Activated naive CD4-positive, alpha-beta T cell treated with anti-CD3 and anti-CD28 coated beads for 36 hours (primary cell): ENCODE measurements at regions of chr10 and their contacts with region 1.

Region 1: DNA sequence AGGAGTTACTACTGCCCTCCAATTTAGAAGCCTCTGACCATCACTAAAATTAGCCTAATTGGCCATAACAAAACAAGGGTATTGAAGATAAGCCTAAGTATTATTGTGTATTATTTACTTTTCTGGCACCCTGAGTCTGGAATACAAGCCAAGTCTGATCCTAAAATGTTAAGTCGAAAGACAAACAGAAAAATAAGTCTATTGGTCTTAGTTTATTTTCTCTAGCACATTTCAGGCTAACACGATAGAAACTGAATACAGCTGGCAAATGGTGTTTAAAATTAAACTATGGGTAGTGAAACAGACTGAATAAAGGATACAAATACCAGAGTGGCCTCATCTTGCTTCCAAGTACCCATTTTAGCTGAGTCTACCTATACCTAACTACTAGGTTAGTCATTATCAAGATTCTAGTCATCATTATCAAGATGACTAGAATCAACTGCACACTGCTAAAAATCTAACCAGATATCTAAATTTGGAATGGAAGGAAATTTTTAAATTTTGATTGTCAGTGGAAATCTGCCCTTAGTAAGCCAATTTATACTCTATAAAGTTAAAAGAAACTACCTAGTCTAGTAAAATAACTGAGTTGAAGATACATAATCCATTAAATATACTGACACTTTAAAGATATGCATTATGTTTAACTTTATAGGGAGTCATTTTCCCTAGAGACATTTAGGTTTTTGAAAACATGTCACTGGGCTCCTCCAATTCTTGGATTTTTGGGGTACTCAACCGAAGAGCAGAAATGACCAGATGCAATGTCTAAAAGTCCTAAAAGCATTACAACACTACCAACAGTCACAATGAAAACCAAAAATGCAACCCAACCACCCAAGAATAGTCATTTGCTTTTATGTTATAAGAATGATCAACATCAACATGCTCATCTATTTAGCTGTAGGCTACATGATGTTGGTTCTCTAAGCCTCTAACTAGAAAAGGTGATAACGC is 80.9 kb downstream of the NT5C2 start:
- DNase-seq: no peak
- H3K4me3 Mint-ChIP-seq: no peak overlapping the region
- H3K27ac Mint-ChIP-seq: peak overlapping the region; percentile 41
- H3K4me1 Mint-ChIP-seq: peaks cover 18% of the 10 kb centered on the region
- H3K27me3 Mint-ChIP-seq: no peaks in the 10 kb centered on the region

Region 2: GRCh38 chr10:103139803-103140202 is 27.6 kb after region 1 on chr10:
- CTCF ChIA-PET with region 1: no interaction called
- intact Hi-C with region 1: loop called (anchors 1 kb)
- DNase-seq: peak; percentile 10
- H3K4me3 Mint-ChIP-seq: no peak overlapping the region
- H3K27ac Mint-ChIP-seq: no peak overlapping the region
- H3K4me1 Mint-ChIP-seq: peaks cover 23% of the 10 kb centered on the region
- H3K27me3 Mint-ChIP-seq: no peaks in the 10 kb centered on the region

Region 3: DNA sequence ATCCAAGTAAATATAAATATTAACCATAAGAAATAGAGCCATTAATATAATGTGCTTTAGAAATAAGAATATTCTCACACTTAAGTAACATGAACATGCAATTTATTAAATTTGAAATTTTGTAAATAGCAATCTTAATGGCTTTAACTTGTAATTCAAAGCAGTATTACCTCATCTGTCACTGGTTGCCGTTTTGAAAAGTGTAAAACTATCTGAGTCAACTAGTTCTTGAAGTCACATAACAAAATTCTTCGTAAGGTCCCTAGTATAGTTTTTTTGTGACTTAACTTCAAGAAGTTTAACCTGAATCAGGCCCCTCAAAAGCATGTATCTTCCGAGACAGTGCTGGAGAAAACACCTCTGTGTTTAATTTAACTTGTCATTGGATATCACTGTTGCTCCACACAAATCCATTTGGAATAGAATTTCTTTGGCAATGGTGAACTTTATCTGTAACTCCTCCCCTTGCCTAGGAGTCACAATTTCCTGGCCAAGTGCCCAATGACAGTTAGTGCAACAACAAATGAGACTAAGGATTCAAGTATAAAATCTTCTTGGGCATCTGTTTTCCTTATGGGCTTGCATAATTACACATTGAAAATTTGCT is 33.8 kb after region 1 on chr10:
- CTCF ChIA-PET with region 1: no interaction called
- intact Hi-C with region 1: loop called (anchors 1 kb)
- DNase-seq: peak; percentile 60
- H3K4me3 Mint-ChIP-seq: no peak overlapping the region
- H3K27ac Mint-ChIP-seq: no peak overlapping the region
- H3K4me1 Mint-ChIP-seq: peaks cover 8% of the 10 kb centered on the region
- H3K27me3 Mint-ChIP-seq: no peaks in the 10 kb centered on the region